Activated CD4-positive, alpha-beta memory T cell treated with anti-CD3 and anti-CD28 coated beads, Interleukin-2, amount 10 ng/mL, durations not matched to agents 7 days and 5 days (primary cell): ENCODE measurements at regions of chr1 and their contacts with region 1.

Region 1: GRCh38 chr1:171313835-171314320 is at the start of gene FMO4:
- DNase-seq: peak; percentile 85
- H3K4me3 Mint-ChIP-seq: peak within 1 kb of the TSS; percentile 66
- H3K27ac Mint-ChIP-seq: peak within 1 kb of the TSS; percentile 40
- H3K4me1 Mint-ChIP-seq: peaks cover 16% of the 10 kb centered on the region
- H3K27me3 Mint-ChIP-seq: no peaks in the 10 kb centered on the region
- total RNA-seq, gene FMO4: 1.2 to 1.8 TPM

Region 2: DNA sequence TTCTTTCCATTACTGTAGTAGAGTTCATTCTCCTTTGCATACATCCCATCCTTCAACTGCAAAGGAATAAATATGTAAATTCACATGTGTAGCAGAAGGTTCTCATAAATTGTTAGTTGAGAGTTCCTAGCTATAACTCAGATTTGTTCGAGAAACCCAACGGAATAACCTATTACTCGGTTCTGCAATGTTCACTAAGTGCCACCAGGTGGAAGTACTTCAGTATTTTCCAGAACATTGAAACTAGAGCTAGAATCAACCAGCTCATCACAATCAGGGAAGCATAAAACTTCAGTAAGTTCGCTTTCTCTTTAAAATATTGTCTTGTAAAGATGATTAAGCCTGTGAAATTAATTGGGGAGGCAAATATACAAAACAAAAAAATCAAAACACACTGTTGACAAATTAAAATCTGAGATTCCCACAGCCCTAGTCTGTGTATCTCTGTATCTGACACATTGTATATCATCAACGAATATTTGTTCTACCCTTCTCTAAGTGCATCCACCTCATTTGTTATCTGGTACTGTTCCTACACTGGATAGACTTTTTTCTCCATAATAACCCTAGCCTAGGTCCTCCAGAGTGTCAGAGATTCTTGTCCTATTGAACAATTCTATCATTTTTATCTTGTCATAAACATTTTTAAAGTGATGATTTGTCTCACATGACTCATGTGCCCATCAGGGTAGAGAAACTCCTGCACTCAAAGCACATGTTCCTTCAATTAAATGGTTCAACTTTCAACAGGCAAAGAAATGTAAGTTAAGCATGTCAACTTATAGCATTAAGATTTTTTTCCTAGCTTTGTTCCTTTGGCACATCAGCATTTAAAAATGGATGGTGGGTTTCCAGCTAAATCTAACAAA is 346.6 kb before region 1 on chr1:
- CTCF ChIA-PET with region 1: interaction called, 21 read pairs
- POLR2A ChIA-PET with region 1: no interaction called
- DNase-seq: no peak
- H3K4me3 Mint-ChIP-seq: no peak overlapping the region
- H3K27ac Mint-ChIP-seq: no peak overlapping the region
- H3K4me1 Mint-ChIP-seq: no peaks in the 10 kb centered on the region
- H3K27me3 Mint-ChIP-seq: peaks cover 4% of the 10 kb centered on the region

Region 3: DNA sequence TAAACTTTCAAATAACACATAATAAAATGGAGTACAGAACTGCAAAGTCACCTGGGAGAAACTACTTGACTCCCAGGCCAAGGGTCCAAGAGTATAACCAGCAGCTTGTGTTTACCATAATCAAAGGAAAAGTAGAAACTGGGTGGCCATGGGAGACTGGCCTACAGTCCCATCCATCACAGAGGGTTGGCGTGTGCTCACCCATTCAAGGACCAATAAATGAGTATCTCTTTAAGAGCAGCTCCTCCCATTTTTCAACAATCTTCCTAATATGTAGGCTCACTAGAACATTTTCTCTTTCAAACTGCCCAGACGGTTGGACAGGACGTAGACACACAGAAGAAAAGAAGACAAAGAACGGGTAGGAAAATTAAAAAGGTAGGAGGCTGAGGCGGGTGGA is 223.3 kb before region 1 on chr1 and contains the start of gene FMO3:
- CTCF ChIA-PET with region 1: no interaction called
- POLR2A ChIA-PET with region 1: no interaction called
- DNase-seq: no peak
- H3K4me3 Mint-ChIP-seq: no peak within 1 kb of the TSS
- H3K27ac Mint-ChIP-seq: no peak within 1 kb of the TSS
- H3K4me1 Mint-ChIP-seq: no peaks in the 10 kb centered on the region
- H3K27me3 Mint-ChIP-seq: no peaks in the 10 kb centered on the region
- total RNA-seq, gene FMO3: not detected

Region 4: DNA sequence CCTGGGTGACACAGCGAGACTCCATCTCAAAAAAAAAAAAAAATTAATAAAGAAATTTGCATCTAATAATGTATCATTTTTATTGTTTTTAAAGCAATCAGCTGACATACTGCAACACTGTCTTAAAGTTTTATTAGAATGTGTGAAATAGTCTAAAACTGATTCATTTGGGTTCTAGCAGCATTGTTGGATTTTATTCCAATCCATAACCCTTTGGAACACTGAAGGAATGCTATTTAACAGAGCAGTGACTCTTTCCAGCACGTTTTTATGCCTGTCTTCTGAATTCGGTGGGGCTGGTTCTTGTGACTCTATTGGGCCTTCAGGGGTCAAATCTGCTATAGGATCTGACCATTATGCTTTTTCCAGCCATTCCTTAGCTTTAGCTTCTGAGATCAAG is 18.1 kb before region 1 on chr1:
- CTCF ChIA-PET with region 1: interaction called, 10 read pairs
- POLR2A ChIA-PET with region 1: no interaction called
- DNase-seq: no peak
- H3K4me3 Mint-ChIP-seq: no peak overlapping the region
- H3K27ac Mint-ChIP-seq: no peak overlapping the region
- H3K4me1 Mint-ChIP-seq: no peaks in the 10 kb centered on the region
- H3K27me3 Mint-ChIP-seq: peaks cover 8% of the 10 kb centered on the region

Region 5: DNA sequence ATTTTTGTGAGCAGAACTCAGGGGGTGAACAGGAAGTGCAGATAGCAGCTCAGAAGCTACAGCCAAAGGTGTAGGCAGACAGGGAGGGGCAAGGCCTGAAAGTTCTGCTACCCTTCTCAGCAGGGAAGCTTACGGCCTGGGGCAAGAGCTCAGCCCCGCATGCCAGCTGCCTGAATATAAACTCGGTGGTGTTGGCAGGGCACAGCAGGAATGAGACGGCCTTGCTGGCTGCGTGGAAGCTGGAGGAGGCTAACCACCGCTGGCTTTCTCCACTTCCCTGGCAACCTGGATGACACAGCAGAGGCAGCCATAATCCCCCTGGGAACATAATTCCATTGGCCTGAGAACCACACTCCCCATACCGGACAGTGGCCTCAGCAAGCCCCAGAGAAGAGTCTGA is 89.5 kb after region 1 on chr1:
- CTCF ChIA-PET with region 1: no interaction called
- POLR2A ChIA-PET with region 1: no interaction called
- DNase-seq: no peak
- H3K4me3 Mint-ChIP-seq: no peak overlapping the region
- H3K27ac Mint-ChIP-seq: no peak overlapping the region
- H3K4me1 Mint-ChIP-seq: no peaks in the 10 kb centered on the region
- H3K27me3 Mint-ChIP-seq: peaks cover 2% of the 10 kb centered on the region

Region 6: GRCh38 chr1:171506525-171507304 is 192.8 kb after region 1 on chr1:
- CTCF ChIA-PET with region 1: no interaction called
- POLR2A ChIA-PET with region 1: no interaction called
- DNase-seq: no peak
- H3K4me3 Mint-ChIP-seq: no peak overlapping the region
- H3K27ac Mint-ChIP-seq: peak overlapping the region; percentile 11
- H3K4me1 Mint-ChIP-seq: peaks cover 80% of the 10 kb centered on the region
- H3K27me3 Mint-ChIP-seq: no peaks in the 10 kb centered on the region